ENCODE measurements at regions of chr22 and their contacts with region 1.

Region 1: DNA sequence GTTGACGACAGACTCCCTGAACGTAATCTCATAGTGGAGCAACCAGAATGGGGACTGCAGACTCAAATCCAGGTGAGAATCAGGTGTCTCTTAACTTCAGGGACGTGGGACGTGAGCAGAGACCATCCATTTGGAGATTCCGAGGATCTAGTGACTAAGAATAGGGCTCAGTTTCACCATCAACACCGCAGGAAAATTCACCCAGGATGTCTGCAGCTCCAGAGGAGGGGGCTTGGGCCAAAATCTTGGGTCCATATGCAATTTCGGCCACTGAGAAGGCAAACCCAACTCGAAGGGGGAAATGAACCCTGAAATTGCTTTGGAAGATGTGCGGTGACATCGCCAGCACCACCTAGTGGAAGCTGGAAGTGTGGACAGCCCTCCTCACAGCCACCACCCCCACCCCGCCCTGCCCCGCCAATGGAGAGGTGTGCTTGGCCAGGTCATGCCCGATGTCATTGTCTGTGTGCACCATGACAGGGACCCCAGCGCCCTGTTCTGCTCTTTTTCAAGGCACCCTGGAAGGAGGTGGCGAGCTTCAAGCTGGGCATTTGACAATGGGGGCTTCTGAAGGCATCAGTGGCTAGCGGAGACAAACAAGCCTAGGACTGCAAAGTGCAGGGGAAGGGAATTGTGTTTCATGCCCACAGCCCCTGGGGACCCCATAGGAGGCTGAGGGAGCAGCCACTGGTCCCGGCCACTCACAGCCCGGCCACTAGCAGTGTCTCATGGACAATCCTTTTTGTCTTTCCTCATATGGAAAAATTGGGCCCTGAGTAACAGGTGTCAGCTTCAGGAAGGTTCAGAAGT is 24.8 kb downstream of the APOL1 start:
- DNase-seq: peak; percentile 39
- H3K4me3 ChIP-seq: no peak overlapping the region
- H3K27ac ChIP-seq: no peak overlapping the region
- H3K4me1 ChIP-seq: no peaks in the 10 kb centered on the region
- H3K27me3 ChIP-seq: no peaks in the 10 kb centered on the region
- CTCF ChIP-seq: peak; percentile 57 to 75

Region 2: GRCh38 chr22:36212306-36212705 is 65.4 kb before region 1 on chr22:
- CTCF ChIA-PET with region 1: no interaction called
- dilution Hi-C with region 1: no loop called
- in situ Hi-C with region 1: no loop called
- intact Hi-C with region 1: no loop called
- DNase-seq: no peak
- H3K4me3 ChIP-seq: no peak overlapping the region
- H3K27ac ChIP-seq: no peak overlapping the region
- H3K4me1 ChIP-seq: no peaks in the 10 kb centered on the region
- H3K27me3 ChIP-seq: no peaks in the 10 kb centered on the region
- CTCF ChIP-seq: no peak

Region 3: GRCh38 chr22:36239401-36240171 is 38.1 kb before region 1 on chr22 and contains the start of gene APOL2:
- CTCF ChIA-PET with region 1: interaction called, 3 read pairs
- dilution Hi-C with region 1: no loop called
- in situ Hi-C with region 1: no loop called
- intact Hi-C with region 1: loop called (anchors 5 kb)
- DNase-seq: peak; percentile 89
- H3K4me3 ChIP-seq: peak within 1 kb of the TSS; percentile 58 to 73 (median 71)
- H3K27ac ChIP-seq: peak within 1 kb of the TSS; percentile 39
- H3K4me1 ChIP-seq: peaks cover 18% of the 10 kb centered on the region
- H3K27me3 ChIP-seq: no peaks in the 10 kb centered on the region
- CTCF ChIP-seq: peak; percentile 52 to 79
- total RNA-seq, gene APOL2: 16.8 to 24.3 TPM

Measured in mammary epithelial cell (primary cell).